CD4-positive, alpha-beta T cell (primary cell): ENCODE measurements at regions of chr9 and their contacts with region 1.

Region 1: DNA sequence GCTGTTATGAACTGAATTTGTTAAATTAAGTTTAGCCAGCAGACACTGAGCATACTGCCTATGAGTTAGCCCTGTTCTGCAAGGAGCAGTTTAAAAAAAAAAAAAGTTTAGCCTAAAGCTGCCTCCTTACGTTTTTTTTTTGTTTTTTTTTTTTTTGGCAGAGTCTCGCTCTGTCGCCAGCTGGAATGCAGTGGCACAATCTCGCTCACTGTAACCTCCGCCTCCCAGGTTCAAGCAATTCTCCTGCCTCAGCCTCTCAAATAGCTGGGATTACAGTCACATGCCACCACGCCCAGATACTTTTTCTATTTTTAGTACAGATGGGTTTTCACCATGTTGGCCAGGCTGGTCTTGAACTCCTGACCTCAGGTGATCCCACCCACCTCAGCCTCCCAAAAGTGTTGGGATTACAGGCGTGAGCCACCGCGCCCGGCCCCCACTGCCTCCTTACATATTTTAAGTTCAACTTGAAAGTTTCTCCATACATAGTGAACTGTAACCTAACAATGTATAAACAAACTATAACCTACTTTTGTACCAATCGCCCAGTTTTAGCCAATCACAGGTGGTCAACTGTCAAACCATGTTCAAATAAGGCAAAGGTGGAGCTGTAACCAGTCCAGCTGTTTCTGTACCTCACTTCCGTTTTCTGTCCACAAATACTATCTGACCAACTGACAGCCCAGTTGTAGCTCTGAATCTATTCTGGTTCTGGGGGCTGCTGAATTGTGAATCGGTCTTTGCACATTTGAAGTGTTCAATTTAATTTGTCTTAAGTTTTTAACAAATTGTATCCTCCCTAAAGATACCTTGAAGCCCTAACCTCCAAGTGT is 17.2 kb downstream of the GKAP1 start:
- DNase-seq: no peak
- ATAC-seq: no peak
- H3K4me3 ChIP-seq: no peak overlapping the region
- H3K4me3 Mint-ChIP-seq: no peak overlapping the region
- H3K27ac ChIP-seq: no peak overlapping the region
- H3K27ac Mint-ChIP-seq: no peak overlapping the region
- H3K4me1 ChIP-seq: no peaks in the 10 kb centered on the region
- H3K4me1 Mint-ChIP-seq: no peaks in the 10 kb centered on the region
- H3K27me3 ChIP-seq: no peaks in the 10 kb centered on the region
- H3K27me3 Mint-ChIP-seq: no peaks in the 10 kb centered on the region
- CTCF ChIP-seq: no peak

Region 2: GRCh38 chr9:83617299-83617698 is 183.1 kb before region 1 on chr9:
- CTCF ChIA-PET with region 1: no interaction called
- POLR2A ChIA-PET with region 1: no interaction called
- intact Hi-C with region 1: loop called in 1 of 2 experiments (anchors 5 kb)
- DNase-seq: no peak
- ATAC-seq: no peak
- H3K4me3 ChIP-seq: no peak overlapping the region
- H3K4me3 Mint-ChIP-seq: no peak overlapping the region
- H3K27ac ChIP-seq: no peak overlapping the region
- H3K27ac Mint-ChIP-seq: no peak overlapping the region
- H3K4me1 ChIP-seq: peaks cover 7% of the 10 kb centered on the region
- H3K4me1 Mint-ChIP-seq: peaks cover 6% of the 10 kb centered on the region
- H3K27me3 ChIP-seq: no peaks in the 10 kb centered on the region
- H3K27me3 Mint-ChIP-seq: peaks cover 7% of the 10 kb centered on the region
- CTCF ChIP-seq: no peak